CD4-positive, alpha-beta T cell (primary cell): ENCODE measurements at regions of chr20 and their contacts with region 1.

Region 1: DNA sequence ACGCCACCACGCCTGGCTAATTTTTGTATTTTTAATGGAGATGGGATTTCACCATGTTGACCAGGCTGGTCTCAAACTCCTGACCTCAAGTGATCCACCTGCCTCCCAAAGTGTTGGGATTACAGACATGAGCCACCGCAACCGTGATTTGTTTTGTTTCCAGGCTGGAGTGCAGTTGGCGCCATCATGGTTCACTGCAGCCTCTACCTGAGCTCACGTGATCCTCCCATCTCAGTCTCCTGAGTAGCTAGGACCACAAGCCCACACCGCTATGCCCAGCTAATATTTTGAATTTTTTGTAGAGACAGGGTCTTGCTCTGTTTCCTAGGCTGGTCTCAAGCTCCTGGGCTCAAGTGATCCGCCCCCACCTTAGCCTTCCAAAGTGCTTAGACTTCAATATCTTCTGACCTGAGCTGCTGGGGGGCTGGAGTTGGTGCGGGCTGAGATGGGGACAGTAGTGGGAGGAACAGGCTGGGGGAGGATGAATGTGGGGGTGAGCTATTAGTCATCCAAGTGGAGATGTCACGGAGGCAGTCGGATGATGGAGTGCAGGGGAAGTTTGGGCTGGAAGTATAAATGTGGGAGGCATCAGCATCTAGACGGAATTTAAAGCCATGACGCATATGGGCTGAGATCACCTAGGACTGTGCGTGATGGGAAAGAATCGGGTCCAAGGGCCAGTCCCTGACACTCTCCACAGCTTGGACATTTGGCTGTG is 23.1 kb upstream of the ZMYND8 start:
- DNase-seq: no peak
- ATAC-seq: no peak
- H3K4me3 ChIP-seq: no peak overlapping the region
- H3K4me3 Mint-ChIP-seq: no peak overlapping the region
- H3K27ac ChIP-seq: no peak overlapping the region
- H3K27ac Mint-ChIP-seq: no peak overlapping the region
- H3K4me1 ChIP-seq: peaks cover 12% of the 10 kb centered on the region
- H3K4me1 Mint-ChIP-seq: peaks cover 6% of the 10 kb centered on the region
- H3K27me3 ChIP-seq: no peaks in the 10 kb centered on the region
- H3K27me3 Mint-ChIP-seq: no peaks in the 10 kb centered on the region
- CTCF ChIP-seq: no peak

Region 2: GRCh38 chr20:47196091-47197081 is 183.2 kb before region 1 on chr20:
- CTCF ChIA-PET with region 1: interaction called, 12 read pairs
- POLR2A ChIA-PET with region 1: interaction called, 3 read pairs
- intact Hi-C with region 1: loop called (anchors 1 to 2 kb)
- DNase-seq: peak; percentile 44 to 81 (median 66)
- ATAC-seq: peak; percentile 74
- H3K4me3 ChIP-seq: no peak overlapping the region
- H3K4me3 Mint-ChIP-seq: no peak overlapping the region
- H3K27ac ChIP-seq: no peak overlapping the region
- H3K27ac Mint-ChIP-seq: no peak overlapping the region
- H3K4me1 ChIP-seq: peaks cover 5% of the 10 kb centered on the region
- H3K4me1 Mint-ChIP-seq: no peaks in the 10 kb centered on the region
- H3K27me3 ChIP-seq: no peaks in the 10 kb centered on the region
- H3K27me3 Mint-ChIP-seq: peaks cover 3% of the 10 kb centered on the region
- CTCF ChIP-seq: peak; percentile 98

Region 3: GRCh38 chr20:47272893-47273590 is 106.5 kb before region 1 on chr20:
- CTCF ChIA-PET with region 1: interaction called, 185 read pairs
- POLR2A ChIA-PET with region 1: interaction called, 17 read pairs
- intact Hi-C with region 1: loop called (anchors 1 kb)
- DNase-seq: peak in 12 of 14 experiments; percentile 7 to 81 (median 31)
- ATAC-seq: peak; percentile 84
- H3K4me3 ChIP-seq: no peak overlapping the region
- H3K4me3 Mint-ChIP-seq: no peak overlapping the region
- H3K27ac ChIP-seq: no peak overlapping the region
- H3K27ac Mint-ChIP-seq: peak overlapping the region; percentile 52
- H3K4me1 ChIP-seq: no peaks in the 10 kb centered on the region
- H3K4me1 Mint-ChIP-seq: peaks cover 28% of the 10 kb centered on the region
- H3K27me3 ChIP-seq: no peaks in the 10 kb centered on the region
- H3K27me3 Mint-ChIP-seq: no peaks in the 10 kb centered on the region
- CTCF ChIP-seq: peak; percentile 98

Region 4: DNA sequence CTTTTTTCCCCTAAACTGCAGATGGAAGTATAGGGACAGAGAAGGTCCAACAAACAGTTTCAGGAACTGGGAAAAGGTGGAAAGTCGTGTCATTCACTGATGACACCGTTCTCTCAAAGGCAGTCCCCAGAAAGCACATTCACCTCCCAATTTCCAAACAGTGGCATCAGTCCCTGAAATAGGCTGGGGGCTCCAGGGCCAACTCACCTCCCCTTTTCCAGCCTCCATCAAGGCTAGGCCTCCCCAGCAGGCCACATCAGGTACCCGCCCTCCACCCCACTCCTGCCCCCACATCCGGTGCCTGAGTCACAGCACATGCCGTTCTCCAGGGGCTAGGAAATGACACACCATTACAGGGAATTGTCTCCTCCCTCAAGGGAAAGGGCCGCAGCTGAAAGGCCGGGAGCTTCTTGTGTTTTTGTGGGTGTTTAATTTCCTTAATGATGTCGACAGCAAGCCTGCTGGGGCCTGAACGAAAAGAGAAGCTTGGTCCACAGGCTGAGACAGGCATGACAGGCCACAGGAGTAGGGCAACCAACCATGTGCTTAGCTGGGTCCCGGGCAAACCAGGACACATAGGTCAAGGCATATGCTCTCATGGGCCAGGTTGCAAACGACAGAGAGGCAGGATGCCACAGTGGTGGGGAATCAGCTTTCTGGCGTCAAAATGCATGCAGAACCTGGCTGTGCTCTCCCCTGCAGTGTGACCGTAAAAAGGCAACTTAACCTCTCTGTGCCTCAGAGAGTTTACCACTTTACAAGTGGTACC is 62.3 kb before region 1 on chr20:
- CTCF ChIA-PET with region 1: interaction called, 16 read pairs
- POLR2A ChIA-PET with region 1: no interaction called
- intact Hi-C with region 1: no loop called
- DNase-seq: peak in 13 of 14 experiments; percentile 15 to 71 (median 47)
- ATAC-seq: peak; percentile 75
- H3K4me3 ChIP-seq: no peak overlapping the region
- H3K4me3 Mint-ChIP-seq: peak overlapping the region; percentile 38
- H3K27ac ChIP-seq: peak overlapping the region; percentile 37 to 42
- H3K27ac Mint-ChIP-seq: peak overlapping the region; percentile 81
- H3K4me1 ChIP-seq: peaks cover 53% of the 10 kb centered on the region
- H3K4me1 Mint-ChIP-seq: peaks cover 72% of the 10 kb centered on the region
- H3K27me3 ChIP-seq: no peaks in the 10 kb centered on the region
- H3K27me3 Mint-ChIP-seq: no peaks in the 10 kb centered on the region
- CTCF ChIP-seq: no peak

Region 5: GRCh38 chr20:47620808-47621805 is 241.5 kb after region 1 on chr20:
- CTCF ChIA-PET with region 1: interaction called, 34 read pairs
- POLR2A ChIA-PET with region 1: no interaction called
- intact Hi-C with region 1: loop called (anchors 1 to 2 kb)
- DNase-seq: peak in 4 of 14 experiments; percentile 27 to 73 (median 68)
- ATAC-seq: peak; percentile 52
- H3K4me3 ChIP-seq: no peak overlapping the region
- H3K4me3 Mint-ChIP-seq: no peak overlapping the region
- H3K27ac ChIP-seq: no peak overlapping the region
- H3K27ac Mint-ChIP-seq: peak overlapping the region; percentile 25
- H3K4me1 ChIP-seq: no peaks in the 10 kb centered on the region
- H3K4me1 Mint-ChIP-seq: peaks cover 23% of the 10 kb centered on the region
- H3K27me3 ChIP-seq: no peaks in the 10 kb centered on the region
- H3K27me3 Mint-ChIP-seq: no peaks in the 10 kb centered on the region
- CTCF ChIP-seq: peak; percentile 85

Region 6: DNA sequence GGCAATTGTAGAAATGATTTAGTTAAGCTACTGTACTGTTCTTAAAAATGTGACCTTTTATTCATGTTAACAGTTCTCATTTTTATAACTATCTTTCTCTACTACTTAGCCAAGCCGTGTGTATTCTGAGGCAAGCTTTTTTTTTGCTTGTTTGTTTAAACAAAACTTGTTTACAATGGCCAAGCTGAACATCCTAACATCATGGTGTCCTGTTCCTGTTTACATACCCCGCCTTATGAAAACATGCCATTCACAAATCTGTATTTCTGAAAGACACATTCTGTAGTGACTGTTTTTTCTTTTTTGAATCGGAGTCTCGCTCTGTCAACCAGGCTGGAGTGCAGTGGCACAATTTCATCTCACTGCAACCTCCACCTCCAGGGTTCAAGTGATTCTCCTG is 263.0 kb after region 1 on chr20:
- CTCF ChIA-PET with region 1: no interaction called
- POLR2A ChIA-PET with region 1: no interaction called
- intact Hi-C with region 1: no loop called
- DNase-seq: no peak
- ATAC-seq: no peak
- H3K4me3 ChIP-seq: no peak overlapping the region
- H3K4me3 Mint-ChIP-seq: no peak overlapping the region
- H3K27ac ChIP-seq: no peak overlapping the region
- H3K27ac Mint-ChIP-seq: no peak overlapping the region
- H3K4me1 ChIP-seq: no peaks in the 10 kb centered on the region
- H3K4me1 Mint-ChIP-seq: no peaks in the 10 kb centered on the region
- H3K27me3 ChIP-seq: no peaks in the 10 kb centered on the region
- H3K27me3 Mint-ChIP-seq: no peaks in the 10 kb centered on the region
- CTCF ChIP-seq: no peak